Activated naive CD4-positive, alpha-beta T cell treated with anti-CD3 and anti-CD28 coated beads for 36 hours (primary cell): ENCODE measurements at regions of chr1 and their contacts with region 1.

Region 1: DNA sequence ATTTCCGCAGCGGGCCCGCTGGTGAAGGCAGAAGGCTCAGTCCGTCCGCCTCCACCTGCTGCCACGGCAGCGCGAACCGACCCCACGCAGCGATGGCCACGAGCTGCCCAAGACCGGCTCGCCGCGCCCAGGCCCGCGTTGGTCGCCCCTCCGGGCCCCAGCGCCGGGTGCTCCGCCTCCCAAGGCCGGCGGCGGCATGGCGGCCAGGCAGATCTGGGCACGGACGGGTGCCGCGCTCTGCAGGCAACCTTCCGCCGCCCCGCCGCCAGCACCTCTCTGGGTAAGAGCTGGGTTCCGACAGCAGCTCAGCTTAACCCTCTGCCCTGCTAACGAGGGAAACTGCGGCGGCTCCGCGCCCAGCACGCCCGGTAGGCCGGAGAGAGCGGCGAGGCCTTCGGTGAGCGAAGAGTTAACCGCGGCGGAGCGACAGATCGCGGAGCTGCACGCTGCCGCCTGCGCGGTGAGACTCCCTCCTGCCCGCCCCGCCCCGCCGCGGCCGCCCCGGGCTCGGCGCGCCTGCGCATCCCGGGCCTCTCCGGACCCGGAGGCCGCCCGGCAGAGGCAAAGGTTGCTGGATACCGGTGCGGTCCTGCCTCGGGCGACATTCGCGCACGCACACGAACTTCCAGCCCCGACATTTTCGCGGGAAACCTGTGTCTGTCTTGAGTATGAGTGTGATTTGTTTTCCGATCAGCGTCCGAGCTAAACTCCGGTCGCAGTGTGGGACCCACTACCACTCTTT is at the start of gene C1orf53:
- DNase-seq: peak; percentile 77
- H3K4me3 Mint-ChIP-seq: peak within 1 kb of the TSS; percentile 84
- H3K27ac Mint-ChIP-seq: peak within 1 kb of the TSS; percentile 55
- H3K4me1 Mint-ChIP-seq: peaks cover 10% of the 10 kb centered on the region
- H3K27me3 Mint-ChIP-seq: peaks cover 45% of the 10 kb centered on the region
- total RNA-seq, gene C1orf53: 0.52 TPM in 1 of 2 experiments, not detected in the other

Region 2: GRCh38 chr1:197146197-197146889 is 756.3 kb before region 1 on chr1 and contains the start of gene ASPM:
- CTCF ChIA-PET with region 1: no interaction called
- intact Hi-C with region 1: loop called (anchors 2 kb)
- DNase-seq: peak; percentile 98
- H3K4me3 Mint-ChIP-seq: peak within 1 kb of the TSS; percentile 85
- H3K27ac Mint-ChIP-seq: peak within 1 kb of the TSS; percentile 93
- H3K4me1 Mint-ChIP-seq: no peaks in the 10 kb centered on the region
- H3K27me3 Mint-ChIP-seq: peaks cover 19% of the 10 kb centered on the region
- total RNA-seq, gene ASPM: 26.4 to 27.6 TPM

Region 3: DNA sequence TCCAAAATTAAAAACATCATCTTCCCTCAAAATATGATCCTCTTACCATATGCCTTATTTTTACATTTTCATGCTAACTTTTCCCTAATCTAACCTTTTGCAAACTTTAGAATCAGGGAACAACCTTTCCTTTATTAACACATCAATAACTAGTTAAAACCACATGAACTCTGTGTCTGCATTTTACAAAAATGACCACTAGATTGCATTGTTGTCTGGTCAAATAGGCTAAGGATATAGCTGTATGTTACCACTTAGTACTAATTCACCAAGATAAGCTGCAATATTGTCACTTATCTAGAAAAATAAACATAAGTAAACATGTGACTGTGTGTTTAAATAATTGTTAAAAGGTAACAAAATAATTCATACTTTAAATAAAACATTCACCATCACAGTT is 209.7 kb before region 1 on chr1:
- CTCF ChIA-PET with region 1: no interaction called
- intact Hi-C with region 1: no loop called
- DNase-seq: no peak
- H3K4me3 Mint-ChIP-seq: no peak overlapping the region
- H3K27ac Mint-ChIP-seq: no peak overlapping the region
- H3K4me1 Mint-ChIP-seq: peaks cover 17% of the 10 kb centered on the region
- H3K27me3 Mint-ChIP-seq: no peaks in the 10 kb centered on the region

Region 4: DNA sequence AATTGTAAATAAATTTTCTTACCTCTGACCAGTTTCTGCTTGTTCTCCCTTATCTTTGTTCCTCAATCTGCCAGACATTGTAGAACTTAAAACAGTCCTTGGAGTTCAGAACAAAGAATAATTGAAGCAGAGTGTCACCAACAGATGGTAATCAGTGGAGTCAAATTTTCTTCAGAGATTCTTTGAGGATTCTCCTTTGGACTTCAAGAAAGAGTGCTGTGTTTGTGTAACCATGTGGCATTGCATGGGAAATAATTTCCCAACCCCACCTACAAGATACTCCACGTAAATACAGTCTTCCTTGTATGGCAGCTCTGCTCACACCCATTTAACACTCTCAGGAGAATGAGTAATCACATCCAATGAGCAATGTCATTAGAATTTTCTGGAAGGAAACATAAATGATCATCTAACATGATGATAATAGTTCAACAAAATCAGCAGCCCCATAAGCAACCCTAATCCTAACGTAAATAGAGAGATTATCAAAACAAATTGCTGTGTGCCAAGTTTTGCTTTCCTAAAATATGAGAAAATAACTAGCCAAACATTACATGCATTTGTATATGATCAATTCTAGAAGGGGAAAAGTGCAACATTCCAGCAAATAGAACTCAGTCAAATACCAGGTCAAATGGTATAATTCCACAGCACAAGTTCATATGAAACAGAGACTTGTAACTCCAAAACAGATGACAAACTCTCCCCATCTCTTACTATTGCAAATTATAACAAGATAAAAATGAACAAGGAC is 120.5 kb before region 1 on chr1:
- CTCF ChIA-PET with region 1: no interaction called
- intact Hi-C with region 1: no loop called
- DNase-seq: no peak
- H3K4me3 Mint-ChIP-seq: no peak overlapping the region
- H3K27ac Mint-ChIP-seq: no peak overlapping the region
- H3K4me1 Mint-ChIP-seq: peaks cover 22% of the 10 kb centered on the region
- H3K27me3 Mint-ChIP-seq: no peaks in the 10 kb centered on the region

Region 5: GRCh38 chr1:197915862-197916499 is 13.4 kb after region 1 on chr1:
- CTCF ChIA-PET with region 1: interaction called, 7 read pairs
- intact Hi-C with region 1: loop called (anchors 2 kb)
- DNase-seq: no peak
- H3K4me3 Mint-ChIP-seq: peak overlapping the region; percentile 55
- H3K27ac Mint-ChIP-seq: no peak overlapping the region
- H3K4me1 Mint-ChIP-seq: peaks cover 77% of the 10 kb centered on the region
- H3K27me3 Mint-ChIP-seq: peaks cover 94% of the 10 kb centered on the region